Activated CD8-positive, alpha-beta T cell treated with anti-CD3 and anti-CD28 coated beads, Interleukin-2, amount 10 ng/mL, durations not matched to agents 7 days and 5 days (primary cell): ENCODE measurements at regions of chr19 and their contacts with region 1.

Region 1: GRCh38 chr19:35495107-35496064 is 5.1 kb upstream of the KRTDAP start:
- DNase-seq: peak; percentile 69
- ATAC-seq: peak; percentile 92
- H3K4me3 Mint-ChIP-seq: no peak overlapping the region
- H3K27ac Mint-ChIP-seq: no peak overlapping the region
- H3K4me1 Mint-ChIP-seq: peaks cover 4% of the 10 kb centered on the region
- H3K27me3 Mint-ChIP-seq: peaks cover 17% of the 10 kb centered on the region

Region 2: GRCh38 chr19:35352448-35353304 is 142.7 kb before region 1 on chr19:
- CTCF ChIA-PET with region 1: interaction called, 38 read pairs
- POLR2A ChIA-PET with region 1: no interaction called
- DNase-seq: peak; percentile 83
- ATAC-seq: peak; percentile 74
- H3K4me3 Mint-ChIP-seq: no peak overlapping the region
- H3K27ac Mint-ChIP-seq: no peak overlapping the region
- H3K4me1 Mint-ChIP-seq: peaks cover 17% of the 10 kb centered on the region
- H3K27me3 Mint-ChIP-seq: peaks cover 3% of the 10 kb centered on the region

Region 3: DNA sequence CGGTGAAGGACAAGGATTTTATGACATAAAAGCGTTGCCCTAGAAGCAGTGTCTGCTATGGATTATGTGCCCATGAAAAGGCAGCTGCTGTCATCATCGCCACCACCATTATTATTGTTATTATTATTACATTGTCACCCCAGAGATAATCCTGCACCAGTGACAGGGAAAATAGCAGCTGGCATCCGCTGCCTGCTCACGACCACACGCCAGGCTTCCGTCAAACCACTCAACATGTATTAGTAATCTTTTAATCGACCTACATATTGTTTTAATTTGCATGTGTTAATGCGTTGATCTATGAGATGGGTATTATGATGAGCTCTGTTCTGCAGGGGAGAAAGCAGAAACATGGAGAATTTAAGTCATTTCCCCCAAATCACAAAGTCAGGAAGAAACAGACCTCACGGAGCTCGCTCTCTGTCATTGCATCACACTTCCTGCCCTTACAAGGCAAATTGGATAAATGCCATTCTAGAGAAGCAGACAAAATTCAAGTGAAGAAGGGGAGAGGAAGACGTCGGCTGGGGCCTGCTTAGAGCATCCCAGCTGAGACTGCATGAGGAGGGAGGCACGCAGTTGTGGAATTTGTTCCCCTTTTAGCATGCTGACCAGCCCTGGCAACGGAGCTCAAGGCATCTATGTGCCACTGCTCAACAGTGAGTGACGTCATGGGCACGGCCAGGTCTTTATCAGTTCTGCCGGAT is 137.4 kb before region 1 on chr19 and contains the start of gene FFAR3:
- CTCF ChIA-PET with region 1: interaction called, 38 read pairs
- POLR2A ChIA-PET with region 1: no interaction called
- DNase-seq: no peak
- ATAC-seq: no peak
- H3K4me3 Mint-ChIP-seq: no peak within 1 kb of the TSS
- H3K27ac Mint-ChIP-seq: no peak within 1 kb of the TSS
- H3K4me1 Mint-ChIP-seq: peaks cover 11% of the 10 kb centered on the region
- H3K27me3 Mint-ChIP-seq: peaks cover 3% of the 10 kb centered on the region
- total RNA-seq, gene FFAR3: not detected

Region 4: GRCh38 chr19:35462476-35462953 is 32.9 kb before region 1 on chr19:
- CTCF ChIA-PET with region 1: interaction called, 19 read pairs
- POLR2A ChIA-PET with region 1: no interaction called
- DNase-seq: peak; percentile 86
- ATAC-seq: peak; percentile 93
- H3K4me3 Mint-ChIP-seq: peak overlapping the region; percentile 59
- H3K27ac Mint-ChIP-seq: peak overlapping the region; percentile 93
- H3K4me1 Mint-ChIP-seq: peaks cover 36% of the 10 kb centered on the region
- H3K27me3 Mint-ChIP-seq: peaks cover 11% of the 10 kb centered on the region

Region 5: GRCh38 chr19:35468637-35469036 is 26.7 kb before region 1 on chr19:
- CTCF ChIA-PET with region 1: interaction called, 19 read pairs
- POLR2A ChIA-PET with region 1: no interaction called
- DNase-seq: peak; percentile 77
- ATAC-seq: peak; percentile 98
- H3K4me3 Mint-ChIP-seq: no peak overlapping the region
- H3K27ac Mint-ChIP-seq: no peak overlapping the region
- H3K4me1 Mint-ChIP-seq: peaks cover 12% of the 10 kb centered on the region
- H3K27me3 Mint-ChIP-seq: peaks cover 12% of the 10 kb centered on the region

Region 6: GRCh38 chr19:35484252-35485036 is 10.9 kb before region 1 on chr19:
- CTCF ChIA-PET with region 1: interaction called, 18 read pairs
- POLR2A ChIA-PET with region 1: no interaction called
- DNase-seq: no peak
- ATAC-seq: no peak
- H3K4me3 Mint-ChIP-seq: no peak overlapping the region
- H3K27ac Mint-ChIP-seq: no peak overlapping the region
- H3K4me1 Mint-ChIP-seq: no peaks in the 10 kb centered on the region
- H3K27me3 Mint-ChIP-seq: peaks cover 14% of the 10 kb centered on the region

Region 7: GRCh38 chr19:35509861-35510625 is 14.7 kb after region 1 on chr19:
- CTCF ChIA-PET with region 1: interaction called, 22 read pairs
- POLR2A ChIA-PET with region 1: interaction called, 3 read pairs
- DNase-seq: peak; percentile 78
- ATAC-seq: peak; percentile 85
- H3K4me3 Mint-ChIP-seq: peak overlapping the region; percentile 38
- H3K27ac Mint-ChIP-seq: no peak overlapping the region
- H3K4me1 Mint-ChIP-seq: peaks cover 16% of the 10 kb centered on the region
- H3K27me3 Mint-ChIP-seq: peaks cover 58% of the 10 kb centered on the region